ENCODE measurements at regions of chr20 and their contacts with region 1.

Region 1: DNA sequence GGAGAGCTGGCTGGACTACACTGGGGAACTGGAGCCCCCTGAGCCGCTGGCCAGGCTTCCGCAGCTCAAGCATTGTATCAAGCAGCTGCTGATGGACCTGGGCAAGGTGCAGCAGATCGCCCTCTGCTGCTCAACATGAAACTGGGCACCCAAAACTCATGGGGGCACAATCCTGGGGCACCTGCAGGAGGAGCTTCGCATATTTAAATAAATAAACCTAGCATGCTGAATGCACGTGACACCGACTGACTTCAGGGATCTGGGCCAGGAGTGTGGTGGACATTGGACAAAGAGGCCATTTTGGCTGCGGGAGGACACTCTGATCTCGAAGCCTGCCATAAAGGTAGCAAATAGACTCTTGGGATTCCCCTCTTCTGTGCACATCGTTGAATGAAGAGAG is 6.8 kb downstream of the SCAND1 start:
- DNase-seq: no peak
- ATAC-seq: peak in 2 of 8 donors; percentile 10 to 38
- H3K4me3 ChIP-seq: no peak overlapping the region
- H3K27ac ChIP-seq: peak overlapping the region in 1 of 10 donors; percentile 50
- H3K4me1 ChIP-seq: peaks cover 3 to 31% (median 10%) of the 10 kb centered on the region in 9 donors
- H3K27me3 ChIP-seq: no peaks in the 10 kb centered on the region
- CTCF ChIP-seq: peak in 4 of 9 donors; percentile 18 to 29 (median 28)

Region 2: DNA sequence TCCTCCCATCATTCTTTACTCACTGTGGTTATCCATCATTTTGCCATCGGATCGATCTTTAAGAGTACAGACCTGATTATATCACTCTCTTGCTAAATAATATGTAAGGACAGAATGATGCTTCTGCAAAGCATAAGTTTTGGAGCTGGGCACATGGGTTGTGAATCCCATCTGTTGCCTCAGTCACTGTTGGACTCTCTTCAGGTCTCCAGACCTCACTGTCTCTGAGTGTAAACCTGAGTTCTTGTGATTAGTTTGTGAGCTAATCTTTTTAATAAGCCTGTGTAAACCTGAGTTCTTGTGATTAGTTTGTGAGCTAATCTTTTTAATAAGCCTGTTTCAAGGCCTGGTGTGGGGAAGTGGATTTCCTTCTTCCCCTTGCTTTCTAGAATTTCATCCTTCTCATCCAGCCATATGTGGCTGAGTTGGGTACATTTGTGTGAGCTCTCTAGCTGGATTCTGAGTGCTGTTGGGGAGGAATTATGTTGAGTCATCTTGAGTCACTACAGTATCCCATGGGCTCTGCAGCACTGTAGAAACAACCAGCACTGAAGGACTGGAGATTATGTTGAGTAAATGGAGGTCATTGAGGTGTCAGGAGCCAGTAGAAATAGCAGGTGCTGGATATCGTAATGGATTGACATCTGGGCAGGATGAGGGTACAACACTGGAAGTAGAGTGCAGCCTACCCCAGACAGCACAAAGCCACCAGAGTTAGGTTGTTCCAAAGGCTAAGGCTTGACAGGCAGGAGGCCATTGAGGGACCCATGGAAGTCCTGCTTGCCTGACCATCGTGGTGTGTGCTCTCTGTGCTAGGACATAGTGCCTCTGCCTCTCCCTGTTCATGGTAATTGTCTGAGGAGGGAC is 45.6 kb before region 1 on chr20:
- intact Hi-C with region 1: loop called in 1 of 10 experiments (anchors 2 kb)
- DNase-seq: no peak
- ATAC-seq: peak in 3 of 8 donors; percentile 16 to 89 (median 31)
- H3K4me3 ChIP-seq: no peak overlapping the region
- H3K27ac ChIP-seq: no peak overlapping the region
- H3K4me1 ChIP-seq: peaks cover 0 to 21% (median 11%) of the 10 kb centered on the region in 9 donors
- H3K27me3 ChIP-seq: no peaks in the 10 kb centered on the region
- CTCF ChIP-seq: no peak

Measured in heart right ventricle (tissue), 16 donors.